Psoas muscle (tissue), 8 donors: ENCODE measurements at regions of chr7 and their contacts with region 1.

Region 1: DNA sequence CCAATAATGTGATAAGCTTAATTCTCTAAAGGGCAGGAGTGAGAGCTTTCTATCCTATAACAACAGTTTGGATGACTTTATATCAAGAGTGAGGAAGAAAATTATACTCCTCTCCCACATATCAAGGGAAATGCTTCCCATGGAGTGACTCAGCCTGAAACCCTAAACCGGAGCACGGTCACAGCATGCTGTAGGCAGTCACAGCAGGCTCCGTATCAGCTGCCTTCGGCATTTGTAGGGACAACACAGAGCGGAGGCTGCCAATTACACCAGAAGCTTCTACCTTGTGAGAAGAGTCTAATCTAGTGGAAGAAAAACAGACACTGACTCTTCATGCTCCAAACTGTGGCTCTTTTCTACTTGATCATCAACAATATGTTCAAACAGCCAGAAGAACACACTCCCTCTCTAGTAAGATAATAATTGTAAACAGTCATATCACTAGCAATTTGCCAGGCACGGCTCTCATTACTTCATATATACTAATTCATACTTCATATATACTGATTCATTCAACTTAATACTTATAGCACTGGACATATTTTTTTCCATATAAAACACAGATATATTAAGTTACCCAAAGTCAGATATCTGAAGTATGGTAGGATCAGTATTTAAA is 65.9 kb downstream of the DGKB start:
- DNase-seq: peak; percentile 54 to 77
- ATAC-seq: peak; percentile 93 to 97 (median 96)
- H3K4me3 ChIP-seq: peak overlapping the region; percentile 44
- H3K27ac ChIP-seq: peak overlapping the region; percentile 91
- H3K4me1 ChIP-seq: peaks cover 36% of the 10 kb centered on the region
- H3K27me3 ChIP-seq: no peaks in the 10 kb centered on the region
- CTCF ChIP-seq: no peak

Region 2: GRCh38 chr7:14666304-14666703 is 170.4 kb before region 1 on chr7:
- intact Hi-C with region 1: no loop called
- DNase-seq: no peak
- ATAC-seq: no peak
- H3K4me3 ChIP-seq: no peak overlapping the region
- H3K27ac ChIP-seq: no peak overlapping the region
- H3K4me1 ChIP-seq: no peaks in the 10 kb centered on the region
- H3K27me3 ChIP-seq: no peaks in the 10 kb centered on the region
- CTCF ChIP-seq: no peak

Region 3: GRCh38 chr7:14761510-14762296 is 75.0 kb before region 1 on chr7:
- intact Hi-C with region 1: loop called (anchors 1 to 10 kb)
- DNase-seq: peak; percentile 82 to 89
- ATAC-seq: peak; percentile 97 to 99 (median 98)
- H3K4me3 ChIP-seq: peak overlapping the region; percentile 23
- H3K27ac ChIP-seq: peak overlapping the region; percentile 89
- H3K4me1 ChIP-seq: peaks cover 25% of the 10 kb centered on the region
- H3K27me3 ChIP-seq: no peaks in the 10 kb centered on the region
- CTCF ChIP-seq: no peak

Region 4: GRCh38 chr7:14786314-14786895 is 50.3 kb before region 1 on chr7:
- intact Hi-C with region 1: no loop called
- DNase-seq: no peak
- ATAC-seq: peak in 1 of 4 donors; percentile 22
- H3K4me3 ChIP-seq: no peak overlapping the region
- H3K27ac ChIP-seq: no peak overlapping the region
- H3K4me1 ChIP-seq: no peaks in the 10 kb centered on the region
- H3K27me3 ChIP-seq: no peaks in the 10 kb centered on the region
- CTCF ChIP-seq: no peak

Region 5: GRCh38 chr7:15015545-15016326 is 179.1 kb after region 1 on chr7:
- intact Hi-C with region 1: loop called in 1 of 2 experiments (anchors 10 kb)
- DNase-seq: no peak
- ATAC-seq: peak; percentile 86 to 93 (median 92)
- H3K4me3 ChIP-seq: peak overlapping the region; percentile 54
- H3K27ac ChIP-seq: peak overlapping the region; percentile 63
- H3K4me1 ChIP-seq: peaks cover 3% of the 10 kb centered on the region
- H3K27me3 ChIP-seq: no peaks in the 10 kb centered on the region
- CTCF ChIP-seq: peak; percentile 76